ENCODE measurements at regions of chr5 and their contacts with region 1.

Region 1: GRCh38 chr5:135373736-135374515 is 25.1 kb downstream of the MACROH2A1 start:
- DNase-seq: no peak
- H3K4me3 Mint-ChIP-seq: no peak overlapping the region
- H3K27ac Mint-ChIP-seq: no peak overlapping the region
- H3K4me1 Mint-ChIP-seq: peaks cover 12% of the 10 kb centered on the region
- H3K27me3 Mint-ChIP-seq: no peaks in the 10 kb centered on the region
- CTCF ChIP-seq: no peak

Region 2: GRCh38 chr5:135179308-135179980 is 194.5 kb before region 1 on chr5:
- CTCF ChIA-PET with region 1: no interaction called
- intact Hi-C with region 1: no loop called
- DNase-seq: no peak
- H3K4me3 Mint-ChIP-seq: no peak overlapping the region
- H3K27ac Mint-ChIP-seq: no peak overlapping the region
- H3K4me1 Mint-ChIP-seq: no peaks in the 10 kb centered on the region
- H3K27me3 Mint-ChIP-seq: peaks cover 24% of the 10 kb centered on the region
- CTCF ChIP-seq: no peak

Region 3: DNA sequence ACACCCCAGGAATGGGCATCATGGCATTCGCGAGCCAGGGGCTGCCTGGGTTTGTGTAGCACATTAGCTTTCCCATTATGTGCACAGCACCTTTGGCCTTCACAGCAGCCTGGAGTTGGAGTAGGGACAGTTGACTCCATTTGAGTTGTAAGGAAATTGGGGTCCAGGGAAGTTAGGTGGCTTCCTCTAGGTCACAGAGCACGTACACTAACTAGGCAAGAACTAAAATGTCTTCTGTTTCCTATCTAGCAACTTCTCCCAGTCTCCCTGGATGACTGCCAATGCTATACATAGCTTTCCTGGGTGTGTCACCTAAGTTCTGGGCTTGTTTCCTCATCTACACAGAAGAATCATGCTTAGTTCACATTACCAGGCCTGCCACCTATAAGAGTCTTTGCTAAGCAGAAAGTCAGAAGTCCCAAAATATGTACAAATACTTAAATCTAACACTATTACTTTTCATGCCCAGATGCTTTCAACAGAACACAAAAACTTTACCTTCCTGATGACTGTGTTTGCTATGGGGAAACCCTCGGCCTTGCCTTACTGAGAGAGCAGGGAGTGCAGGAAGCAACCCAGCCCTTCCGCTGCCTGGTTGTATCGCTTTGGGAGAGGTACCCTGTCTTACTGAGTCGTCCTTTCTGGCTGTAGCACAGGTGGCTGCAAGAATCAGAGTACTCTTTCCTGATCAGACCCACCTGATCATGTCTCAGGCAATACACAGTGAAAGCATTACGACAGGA is 13.1 kb after region 1 on chr5:
- CTCF ChIA-PET with region 1: interaction called, 10 read pairs
- intact Hi-C with region 1: no loop called
- DNase-seq: peak; percentile 80
- H3K4me3 Mint-ChIP-seq: peak overlapping the region; percentile 18
- H3K27ac Mint-ChIP-seq: peak overlapping the region; percentile 81
- H3K4me1 Mint-ChIP-seq: peaks cover 47% of the 10 kb centered on the region
- H3K27me3 Mint-ChIP-seq: no peaks in the 10 kb centered on the region
- CTCF ChIP-seq: no peak

Region 4: DNA sequence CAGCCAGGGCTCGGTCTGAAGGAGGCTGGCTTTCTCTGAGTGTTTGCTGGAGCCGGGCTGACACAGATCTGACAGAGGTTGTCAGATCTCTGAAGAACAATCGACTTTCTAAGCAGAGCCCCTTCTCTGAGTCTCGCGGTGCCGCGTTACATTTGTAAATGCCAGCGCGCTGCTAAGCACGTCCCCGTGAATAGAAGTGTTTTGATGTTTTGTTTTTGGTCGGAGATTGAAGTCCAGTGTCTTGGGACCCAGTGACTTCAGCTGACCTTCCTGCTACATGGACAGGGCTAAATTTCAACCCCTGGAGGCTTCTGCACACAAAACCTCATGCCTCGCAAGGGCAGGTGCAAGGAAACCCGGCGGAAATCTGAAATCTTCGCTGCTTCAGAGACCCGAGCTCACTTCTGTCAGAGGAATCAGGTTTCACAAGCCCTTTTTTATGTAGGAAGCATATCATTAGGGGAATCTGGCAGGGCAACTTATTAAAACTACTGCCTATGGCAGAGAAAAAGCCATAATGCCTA is 134.6 kb after region 1 on chr5:
- CTCF ChIA-PET with region 1: no interaction called
- intact Hi-C with region 1: no loop called
- DNase-seq: no peak
- H3K4me3 Mint-ChIP-seq: no peak overlapping the region
- H3K27ac Mint-ChIP-seq: no peak overlapping the region
- H3K4me1 Mint-ChIP-seq: no peaks in the 10 kb centered on the region
- H3K27me3 Mint-ChIP-seq: peaks cover 59% of the 10 kb centered on the region
- CTCF ChIP-seq: no peak

Measured in Calu3 (cell line).